SK-MEL-5 (cell line): ENCODE measurements at regions of chr5 and their contacts with region 1.

Region 1: GRCh38 chr5:31470608-31471007 is 61.3 kb downstream of the DROSHA start:
- DNase-seq: no peak

Region 2: GRCh38 chr5:31427013-31427723 is 43.4 kb before region 1 on chr5:
- in situ Hi-C with region 1: loop called (anchors 5 kb)
- DNase-seq: no peak